Sigmoid colon (tissue), 7 donors: ENCODE measurements at regions of chr7 and their contacts with region 1.

Region 1: GRCh38 chr7:112939574-112940314 is 146.9 kb downstream of the GPR85 start:
- DNase-seq: peak; percentile 100
- H3K4me3 ChIP-seq: peak overlapping the region; percentile 81 to 90 (median 90)
- H3K27ac ChIP-seq: peak overlapping the region; percentile 81 to 87 (median 86)
- H3K4me1 ChIP-seq: peaks cover 0 to 37% (median 24%) of the 10 kb centered on the region in 4 donors
- H3K27me3 ChIP-seq: no peaks in the 10 kb centered on the region
- CTCF ChIP-seq: no peak
- EP300 ChIP-seq: no peak
- POLR2A ChIP-seq: peak; percentile 61 to 64

Region 2: GRCh38 chr7:112449902-112450806 is 489.6 kb before region 1 on chr7 and contains the start of gene IFRD1:
- intact Hi-C with region 1: loop called (anchors 5 kb)
- DNase-seq: peak; percentile 100
- H3K4me3 ChIP-seq: peak within 1 kb of the TSS; percentile 78 to 100 (median 97)
- H3K27ac ChIP-seq: peak within 1 kb of the TSS; percentile 94 to 100 (median 100)
- H3K4me1 ChIP-seq: peaks cover 0 to 45% (median 37%) of the 10 kb centered on the region in 4 donors
- H3K27me3 ChIP-seq: no peaks in the 10 kb centered on the region
- CTCF ChIP-seq: no peak
- EP300 ChIP-seq: peak in 1 of 4 donors; percentile 20
- POLR2A ChIP-seq: peak; percentile 99
- total RNA-seq, gene IFRD1: 45.7 to 63.7 (median 49.7) TPM

Region 3: GRCh38 chr7:112789817-112790585 is 149.7 kb before region 1 on chr7 and contains the start of gene TMEM168:
- intact Hi-C with region 1: loop called (anchors 1 kb)
- DNase-seq: peak; percentile 84
- H3K4me3 ChIP-seq: peak within 1 kb of the TSS; percentile 67 to 93 (median 78)
- H3K27ac ChIP-seq: peak within 1 kb of the TSS; percentile 86 to 90 (median 88)
- H3K4me1 ChIP-seq: peaks cover 0 to 14% (median 12%) of the 10 kb centered on the region in 4 donors
- H3K27me3 ChIP-seq: no peaks in the 10 kb centered on the region
- CTCF ChIP-seq: no peak
- EP300 ChIP-seq: no peak
- POLR2A ChIP-seq: peak; percentile 32 to 49
- total RNA-seq, gene TMEM168: 14.3 to 24.3 (median 16.4) TPM

Region 4: DNA sequence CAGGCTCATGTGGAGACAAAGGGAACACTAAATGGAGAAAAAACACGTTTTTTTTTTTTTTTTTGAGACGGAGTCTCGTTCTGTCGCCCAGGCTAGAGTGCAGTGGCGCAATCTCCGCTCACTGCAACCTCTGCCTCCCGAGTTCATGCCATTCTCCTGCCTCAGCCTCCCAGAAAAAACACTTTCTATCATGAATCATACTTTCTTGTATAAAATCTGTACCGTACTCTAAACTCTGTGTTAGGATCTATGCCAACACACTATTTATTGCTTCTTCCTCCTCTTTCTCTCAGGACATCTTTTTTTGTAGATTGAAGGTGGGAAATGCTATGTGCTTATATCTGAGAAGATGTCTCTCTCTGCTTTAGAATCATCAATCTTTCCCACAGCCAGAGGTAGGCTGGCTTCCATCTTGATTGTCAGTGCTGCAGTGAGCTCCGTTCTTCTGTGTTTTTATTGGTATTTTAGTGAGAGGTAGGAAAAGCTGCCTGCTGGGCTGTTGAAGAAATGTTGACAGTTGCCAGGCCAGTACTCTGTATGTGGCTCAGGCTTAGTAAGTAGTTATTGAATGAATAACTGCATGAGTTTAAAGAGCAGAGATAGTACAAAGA is 45.7 kb after region 1 on chr7:
- intact Hi-C with region 1: loop called (anchors 5 kb)
- DNase-seq: peak; percentile 69
- H3K4me3 ChIP-seq: no peak overlapping the region
- H3K27ac ChIP-seq: peak overlapping the region in 3 of 4 donors; percentile 57 to 61 (median 57)
- H3K4me1 ChIP-seq: peaks cover 0 to 17% (median 14%) of the 10 kb centered on the region in 4 donors
- H3K27me3 ChIP-seq: no peaks in the 10 kb centered on the region
- CTCF ChIP-seq: no peak
- EP300 ChIP-seq: peak in 3 of 4 donors; percentile 5 to 44 (median 38)
- POLR2A ChIP-seq: no peak

Region 5: DNA sequence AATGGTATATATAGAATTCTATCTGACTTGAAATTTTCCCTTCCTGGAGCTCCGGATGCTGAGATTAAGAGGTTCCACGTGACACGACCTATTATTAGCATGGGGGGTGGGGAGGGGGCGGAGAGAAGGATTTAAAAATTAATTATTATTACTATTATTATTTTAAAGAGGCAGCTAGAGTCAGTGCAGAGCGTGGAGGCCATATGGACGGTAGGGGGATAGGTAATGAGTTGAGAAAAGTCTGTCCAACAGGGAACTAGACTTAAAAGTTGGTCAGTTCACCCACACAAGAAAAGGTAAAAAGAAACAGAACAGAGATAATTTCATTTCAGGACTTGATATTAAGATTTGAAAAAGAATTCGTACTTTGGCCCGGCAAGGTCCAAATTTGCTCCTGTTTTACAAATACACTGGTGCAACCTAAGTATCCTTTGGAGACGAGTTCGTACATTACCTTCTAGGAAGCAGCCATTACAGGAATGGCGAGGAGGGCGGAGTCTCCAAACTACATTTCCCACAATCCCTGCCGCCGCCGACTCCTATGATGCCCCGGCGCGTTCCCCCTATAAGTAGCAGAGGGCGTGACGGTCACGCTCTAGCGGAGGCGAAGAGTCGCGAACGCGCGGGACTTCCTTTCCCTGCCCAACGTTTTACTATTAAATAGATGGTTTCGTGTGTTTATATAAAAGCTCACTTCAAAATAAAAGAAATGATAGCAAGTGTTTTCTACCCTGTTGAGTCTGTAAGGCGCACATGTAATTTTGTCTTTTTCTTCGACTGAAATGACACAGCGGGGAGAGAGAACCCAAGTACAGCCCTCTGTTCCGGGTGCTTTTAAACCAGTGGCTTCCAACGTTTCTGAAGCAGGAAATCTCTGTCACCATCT is 178.6 kb after region 1 on chr7 and contains the start of gene SMIM30:
- intact Hi-C with region 1: loop called (anchors 2 kb)
- DNase-seq: peak; percentile 96
- H3K4me3 ChIP-seq: peak within 1 kb of the TSS; percentile 45 to 62 (median 54)
- H3K27ac ChIP-seq: peak within 1 kb of the TSS; percentile 62 to 77 (median 68)
- H3K4me1 ChIP-seq: peaks cover 0 to 11% (median 4%) of the 10 kb centered on the region in 4 donors
- H3K27me3 ChIP-seq: no peaks in the 10 kb centered on the region
- CTCF ChIP-seq: no peak
- EP300 ChIP-seq: no peak
- POLR2A ChIP-seq: peak; percentile 86 to 87
- total RNA-seq, gene SMIM30: 46.2 to 79.0 (median 57.7) TPM

Region 6: DNA sequence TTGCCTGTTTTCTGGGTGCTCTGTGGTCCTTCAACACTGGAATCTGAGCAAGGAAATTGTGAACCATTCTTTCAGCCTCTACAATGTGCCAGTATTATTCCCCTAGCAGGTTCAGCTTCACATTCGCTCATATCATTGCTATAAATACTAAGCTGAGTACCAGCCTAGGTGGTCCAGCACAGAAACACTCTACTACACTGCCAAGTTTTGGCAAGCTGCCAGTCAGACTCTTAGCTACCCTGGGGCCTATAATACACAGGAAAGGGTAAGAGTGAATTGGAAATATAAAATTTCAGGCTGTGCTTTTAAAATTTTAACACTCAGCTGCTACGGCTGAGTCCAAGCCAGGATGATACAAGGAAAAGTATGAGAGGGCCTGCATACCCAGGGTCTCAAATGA is 1029.0 kb after region 1 on chr7:
- intact Hi-C with region 1: no loop called
- DNase-seq: no peak
- H3K4me3 ChIP-seq: no peak overlapping the region
- H3K27ac ChIP-seq: no peak overlapping the region
- H3K4me1 ChIP-seq: no peaks in the 10 kb centered on the region
- H3K27me3 ChIP-seq: no peaks in the 10 kb centered on the region
- CTCF ChIP-seq: no peak
- EP300 ChIP-seq: no peak
- POLR2A ChIP-seq: no peak